ENCODE measurements at regions of chr6 and their contacts with region 1.

Region 1: GRCh38 chr6:160520043-160520904 is 143.8 kb downstream of the LPA start:
- DNase-seq: peak; percentile 63
- H3K4me3 Mint-ChIP-seq: peak overlapping the region; percentile 91
- H3K27ac Mint-ChIP-seq: peak overlapping the region; percentile 83
- H3K4me1 Mint-ChIP-seq: peaks cover 18% of the 10 kb centered on the region
- H3K27me3 Mint-ChIP-seq: peaks cover 40% of the 10 kb centered on the region

Region 2: DNA sequence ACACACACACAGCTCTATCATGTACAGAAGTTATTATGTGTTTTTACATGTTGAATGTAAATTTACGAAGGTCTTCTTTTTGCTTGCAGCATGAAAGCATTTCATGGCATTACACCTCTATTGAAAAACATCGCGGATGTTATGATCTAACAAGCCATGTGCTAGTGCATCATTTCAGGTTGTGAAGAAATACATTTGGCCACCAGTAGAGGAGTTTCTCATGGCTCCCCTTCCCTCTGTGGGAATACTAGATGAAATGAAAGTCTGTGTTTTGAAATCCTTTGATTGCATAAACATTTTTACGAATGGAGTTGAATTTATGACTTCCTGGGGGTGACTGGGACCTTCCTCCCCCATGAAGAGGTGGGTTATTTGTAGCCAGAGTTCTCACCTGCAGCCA is 611.7 kb before region 1 on chr6:
- intact Hi-C with region 1: no loop called
- DNase-seq: no peak
- H3K4me3 Mint-ChIP-seq: no peak overlapping the region
- H3K27ac Mint-ChIP-seq: no peak overlapping the region
- H3K4me1 Mint-ChIP-seq: peaks cover 3% of the 10 kb centered on the region
- H3K27me3 Mint-ChIP-seq: peaks cover 21% of the 10 kb centered on the region

Region 3: GRCh38 chr6:160462551-160463109 is 57.6 kb before region 1 on chr6:
- intact Hi-C with region 1: loop called (anchors 1 kb)
- DNase-seq: peak; percentile 76
- H3K4me3 Mint-ChIP-seq: peak overlapping the region; percentile 34
- H3K27ac Mint-ChIP-seq: peak overlapping the region; percentile 71
- H3K4me1 Mint-ChIP-seq: peaks cover 79% of the 10 kb centered on the region
- H3K27me3 Mint-ChIP-seq: peaks cover 14% of the 10 kb centered on the region

Region 4: DNA sequence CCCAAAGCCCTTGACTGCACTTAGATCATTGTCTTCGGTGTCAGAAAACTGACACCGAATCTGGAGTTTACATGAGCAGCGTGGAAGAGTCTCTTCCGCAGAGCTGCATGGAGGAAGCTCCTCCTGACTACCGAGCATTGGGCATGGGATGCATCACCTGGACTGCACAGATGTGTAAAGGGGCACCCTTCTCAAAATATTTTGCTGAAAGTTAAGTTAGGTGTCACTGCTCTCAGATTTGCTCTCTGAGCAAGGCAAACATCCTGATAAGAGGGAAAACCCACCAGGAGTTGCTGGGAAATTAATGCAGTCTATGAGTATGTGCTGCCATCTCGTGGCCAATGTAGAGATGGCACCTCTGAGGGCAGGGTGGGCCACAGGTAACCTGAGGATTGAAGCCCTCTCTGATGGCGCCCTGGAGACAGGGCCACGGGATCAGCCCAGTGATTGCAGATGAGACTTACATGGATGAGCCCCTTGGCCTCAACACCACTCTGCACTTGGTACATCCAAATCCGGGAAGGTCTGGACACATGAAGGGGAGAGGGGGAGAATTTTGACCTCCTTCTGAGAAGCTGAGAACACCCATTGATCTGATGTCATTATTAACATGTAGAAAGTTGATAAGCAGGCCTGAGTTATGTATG is 13.9 kb after region 1 on chr6:
- intact Hi-C with region 1: loop called (anchors 1 kb)
- DNase-seq: peak; percentile 19
- H3K4me3 Mint-ChIP-seq: no peak overlapping the region
- H3K27ac Mint-ChIP-seq: no peak overlapping the region
- H3K4me1 Mint-ChIP-seq: no peaks in the 10 kb centered on the region
- H3K27me3 Mint-ChIP-seq: peaks cover 18% of the 10 kb centered on the region

Region 5: DNA sequence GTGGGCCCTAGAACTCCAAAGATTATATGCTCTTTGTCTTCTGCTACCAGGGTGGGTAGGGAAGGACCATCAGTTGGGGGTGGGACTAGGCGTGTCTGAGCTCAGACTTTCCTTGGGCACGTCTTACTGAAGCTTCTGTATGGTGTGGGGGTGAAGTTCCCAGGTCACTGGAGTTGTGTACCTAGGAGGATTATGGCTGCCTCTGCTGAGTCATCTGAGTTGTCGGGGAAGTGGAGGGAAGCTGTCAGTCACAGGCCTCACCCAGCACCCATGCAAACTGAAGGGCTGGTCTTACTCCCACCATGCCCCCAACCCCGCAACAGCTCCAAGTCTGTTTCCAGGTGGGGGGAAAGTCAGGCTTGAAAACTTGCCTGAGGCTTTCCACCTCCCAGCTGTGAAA is 53.7 kb after region 1 on chr6:
- intact Hi-C with region 1: no loop called
- DNase-seq: no peak
- H3K4me3 Mint-ChIP-seq: no peak overlapping the region
- H3K27ac Mint-ChIP-seq: no peak overlapping the region
- H3K4me1 Mint-ChIP-seq: no peaks in the 10 kb centered on the region
- H3K27me3 Mint-ChIP-seq: peaks cover 2% of the 10 kb centered on the region

Region 6: GRCh38 chr6:160766989-160767660 is 246.9 kb after region 1 on chr6:
- intact Hi-C with region 1: loop called (anchors 5 kb)
- DNase-seq: peak; percentile 24
- H3K4me3 Mint-ChIP-seq: peak overlapping the region; percentile 67
- H3K27ac Mint-ChIP-seq: no peak overlapping the region
- H3K4me1 Mint-ChIP-seq: no peaks in the 10 kb centered on the region
- H3K27me3 Mint-ChIP-seq: peaks cover 27% of the 10 kb centered on the region

Region 7: DNA sequence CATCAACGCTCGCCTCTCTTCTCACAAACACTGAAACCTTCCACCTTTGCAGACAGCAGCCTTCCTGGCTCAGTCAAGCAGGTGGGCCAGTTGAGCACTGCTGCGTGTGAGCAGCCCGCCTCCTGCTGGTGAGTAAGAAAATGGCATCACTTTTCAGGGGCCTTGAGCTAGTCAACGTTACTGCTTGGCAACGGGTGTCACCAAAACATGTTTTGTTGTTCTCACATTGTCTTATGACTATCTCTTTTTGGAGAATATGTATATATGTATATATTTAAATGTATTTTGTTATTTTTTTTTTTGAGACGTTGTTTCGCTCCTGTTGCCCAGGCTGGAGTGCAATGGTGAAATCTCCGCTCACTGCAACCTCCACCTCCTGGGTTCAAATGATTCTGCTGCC is 850.6 kb after region 1 on chr6:
- intact Hi-C with region 1: loop called (anchors 2 kb)
- DNase-seq: peak; percentile 54
- H3K4me3 Mint-ChIP-seq: no peak overlapping the region
- H3K27ac Mint-ChIP-seq: no peak overlapping the region
- H3K4me1 Mint-ChIP-seq: no peaks in the 10 kb centered on the region
- H3K27me3 Mint-ChIP-seq: no peaks in the 10 kb centered on the region